Colonic mucosa (tissue), 4 donors: ENCODE measurements at regions of chr6 and their contacts with region 1.

Region 1: DNA sequence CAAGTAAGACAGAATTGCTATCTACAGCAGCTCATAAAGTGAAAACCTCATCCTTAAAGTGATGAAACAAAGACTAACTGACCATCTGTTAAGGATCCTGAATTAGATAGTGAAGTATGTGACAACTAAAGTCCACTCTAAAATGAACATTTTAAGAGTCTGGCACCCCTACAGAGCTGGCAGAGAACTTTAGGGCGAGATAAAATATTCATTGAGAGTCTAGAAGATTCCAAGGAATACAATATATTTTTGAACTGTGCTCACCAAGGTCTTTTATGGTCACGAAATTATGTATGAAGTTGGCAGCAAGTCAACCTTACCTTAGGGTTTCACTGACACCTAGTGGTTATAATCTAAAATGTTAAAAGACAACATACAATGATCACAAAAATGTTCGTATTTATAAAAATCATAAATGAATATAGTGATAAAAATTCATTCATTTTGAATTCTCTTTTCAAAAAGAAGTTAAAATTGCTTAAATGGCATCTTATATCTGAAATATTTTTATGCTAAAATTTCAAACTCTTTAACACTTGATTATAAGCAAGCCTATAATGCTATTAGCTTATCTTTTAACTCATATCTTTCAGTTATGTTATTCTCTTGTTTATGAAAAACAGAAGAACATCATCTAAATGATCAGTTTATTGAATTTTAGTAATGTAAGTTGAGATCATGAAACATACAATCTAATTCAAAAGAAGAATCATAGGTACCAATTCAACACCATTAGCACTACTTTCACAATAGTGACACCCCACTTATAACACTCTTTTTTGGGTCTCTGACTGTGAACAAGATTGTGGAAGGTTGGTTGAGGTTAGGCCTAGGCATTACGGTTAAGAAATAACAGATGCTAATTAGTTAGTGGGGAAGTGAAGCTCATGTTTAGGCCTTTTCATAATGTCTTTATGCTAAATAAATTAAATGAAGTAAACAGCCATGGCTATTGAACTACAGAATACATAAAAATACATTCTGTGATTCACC is 27.5 kb downstream of the RSPH3 start:
- DNase-seq: no peak
- H3K4me3 ChIP-seq: no peak overlapping the region
- H3K27ac ChIP-seq: no peak overlapping the region
- H3K4me1 ChIP-seq: no peaks in the 10 kb centered on the region
- H3K27me3 ChIP-seq: no peaks in the 10 kb centered on the region
- CTCF ChIP-seq: peak; percentile 34

Region 2: GRCh38 chr6:158213925-158214674 is 758.4 kb before region 1 on chr6:
- intact Hi-C with region 1: loop called (anchors 5 kb)
- DNase-seq: peak; percentile 71
- H3K4me3 ChIP-seq: no peak overlapping the region
- H3K27ac ChIP-seq: no peak overlapping the region
- H3K4me1 ChIP-seq: no peaks in the 10 kb centered on the region
- H3K27me3 ChIP-seq: no peaks in the 10 kb centered on the region
- CTCF ChIP-seq: peak; percentile 62

Region 3: DNA sequence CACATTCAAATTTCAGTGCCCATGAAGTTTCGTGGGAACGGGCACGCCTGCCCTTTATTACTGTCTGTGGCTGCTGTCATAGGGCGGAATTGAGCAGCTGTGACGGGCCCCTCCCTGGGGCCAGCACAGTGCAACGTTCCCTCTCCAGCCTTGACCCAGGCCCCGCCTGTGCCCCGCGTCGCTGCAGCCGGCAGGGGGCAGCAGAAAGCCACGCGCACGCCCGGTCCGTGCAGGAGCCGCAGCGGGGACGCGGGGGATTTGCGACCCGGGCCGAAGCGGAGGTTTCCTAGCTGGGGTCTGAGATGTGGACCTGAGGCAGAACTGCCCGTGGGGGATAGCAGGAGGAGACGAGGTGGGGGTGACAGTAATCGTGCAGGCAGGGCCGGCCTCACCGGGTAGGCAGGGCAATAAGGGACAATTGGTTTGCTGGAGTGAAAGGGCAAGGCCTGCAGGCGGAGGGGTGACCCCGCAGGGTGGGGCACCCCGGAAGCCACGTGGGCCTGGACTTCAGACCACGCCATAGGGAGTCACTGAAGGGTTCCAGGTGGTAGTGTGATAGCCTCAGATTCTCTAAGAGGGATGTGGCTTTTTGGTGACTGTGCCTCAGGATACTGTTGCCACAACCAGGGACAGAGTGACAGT is 268.2 kb before region 1 on chr6:
- intact Hi-C with region 1: loop called (anchors 5 kb)
- DNase-seq: peak; percentile 91
- H3K4me3 ChIP-seq: peak overlapping the region; percentile 38
- H3K27ac ChIP-seq: peak overlapping the region; percentile 47
- H3K4me1 ChIP-seq: peaks cover 8% of the 10 kb centered on the region
- H3K27me3 ChIP-seq: no peaks in the 10 kb centered on the region
- CTCF ChIP-seq: peak; percentile 99

Region 4: GRCh38 chr6:159233365-159234101 is 261.0 kb after region 1 on chr6:
- intact Hi-C with region 1: no loop called
- DNase-seq: no peak
- H3K4me3 ChIP-seq: no peak overlapping the region
- H3K27ac ChIP-seq: no peak overlapping the region
- H3K4me1 ChIP-seq: no peaks in the 10 kb centered on the region
- H3K27me3 ChIP-seq: no peaks in the 10 kb centered on the region
- CTCF ChIP-seq: no peak